ENCODE measurements at regions of chr6 and their contacts with region 1.

Region 1: GRCh38 chr6:149362289-149362688 is 37.8 kb upstream of the SUMO4 start:
- DNase-seq: no peak

Region 2: DNA sequence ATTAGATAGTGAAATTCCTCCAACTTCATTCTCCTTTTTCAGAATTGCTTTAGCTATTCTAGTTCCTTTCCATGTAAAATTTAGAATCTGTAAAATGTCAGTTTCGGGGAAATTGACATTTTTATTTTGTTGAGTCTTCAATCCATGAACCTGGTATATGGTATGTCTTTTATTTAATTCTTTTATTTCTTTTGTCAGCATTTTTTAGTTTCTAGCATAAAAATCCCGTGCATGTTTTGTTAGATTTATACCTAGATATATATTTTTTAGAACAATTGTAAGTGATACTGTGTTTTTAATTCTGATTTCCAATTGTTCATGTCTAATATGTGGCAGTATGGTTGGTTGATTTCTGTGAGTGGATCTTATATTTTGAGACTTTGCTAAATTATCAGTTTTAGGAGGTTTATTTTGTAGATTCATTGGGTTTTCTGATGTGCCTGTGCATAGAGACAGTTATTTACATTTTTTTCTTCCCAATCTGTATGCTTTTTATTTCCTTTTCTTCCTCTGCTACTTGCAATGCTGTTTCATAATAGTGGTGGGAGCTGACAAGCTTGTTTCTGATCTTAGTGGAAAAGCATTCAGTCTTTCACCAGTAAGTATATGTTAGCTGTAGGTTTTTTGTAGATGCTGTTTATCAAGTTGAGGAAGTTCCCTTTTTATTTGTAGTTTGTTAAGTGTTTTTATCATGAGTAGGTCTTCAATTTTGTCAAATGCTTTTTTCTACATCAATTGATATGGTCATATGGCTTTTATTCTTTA is 31.1 kb before region 1 on chr6:
- intact Hi-C with region 1: loop called in 1 of 2 experiments (anchors 2 kb)
- DNase-seq: no peak